Endothelial cell of umbilical vein (primary cell): ENCODE measurements at regions of chr20 and their contacts with region 1.

Region 1: DNA sequence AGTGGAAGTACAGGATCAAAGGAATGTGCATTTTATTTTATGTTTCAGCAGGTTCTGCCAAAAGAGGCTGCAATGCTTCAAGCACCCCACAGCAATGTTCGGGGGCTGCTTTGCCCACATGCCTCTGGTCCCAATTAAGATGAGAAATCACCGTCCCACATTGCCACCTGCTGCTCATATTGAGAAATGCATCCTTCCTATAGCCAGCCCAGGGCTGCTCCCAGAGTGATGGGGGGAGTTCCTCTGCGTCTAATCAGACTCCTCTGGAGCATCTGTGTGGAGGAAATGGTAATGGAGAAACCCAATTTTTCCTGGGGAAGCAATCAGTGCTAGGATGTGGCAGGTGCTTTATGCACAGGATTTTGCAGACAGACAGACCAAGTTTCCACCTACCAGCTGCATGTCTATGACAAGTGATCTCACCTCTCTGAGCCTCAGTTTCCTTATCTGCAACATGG is 33.7 kb downstream of the PTGIS start:
- DNase-seq: peak; percentile 60
- H3K4me3 ChIP-seq: no peak overlapping the region
- H3K27ac ChIP-seq: no peak overlapping the region
- H3K4me1 ChIP-seq: no peaks in the 10 kb centered on the region
- H3K27me3 ChIP-seq: peaks cover 0 to 2% of the 10 kb centered on the region in 2 experiments
- CTCF ChIP-seq: peak; percentile 71
- POLR2A ChIP-seq: no peak

Region 2: GRCh38 chr20:49338061-49338460 is 196.2 kb before region 1 on chr20:
- CTCF ChIA-PET with region 1: interaction called, 5 read pairs
- POLR2A ChIA-PET with region 1: no interaction called
- dilution Hi-C with region 1: no loop called
- intact Hi-C with region 1: loop called (anchors 1 kb)
- DNase-seq: no peak
- H3K4me3 ChIP-seq: no peak overlapping the region
- H3K27ac ChIP-seq: no peak overlapping the region
- H3K4me1 ChIP-seq: no peaks in the 10 kb centered on the region
- H3K27me3 ChIP-seq: peaks cover 0 to 2% of the 10 kb centered on the region in 2 experiments
- CTCF ChIP-seq: no peak
- POLR2A ChIP-seq: no peak

Region 3: GRCh38 chr20:49631061-49631788 is 96.9 kb after region 1 on chr20:
- CTCF ChIA-PET with region 1: no interaction called
- POLR2A ChIA-PET with region 1: no interaction called
- dilution Hi-C with region 1: no loop called
- intact Hi-C with region 1: no loop called
- DNase-seq: no peak
- H3K4me3 ChIP-seq: no peak overlapping the region
- H3K27ac ChIP-seq: no peak overlapping the region
- H3K4me1 ChIP-seq: no peaks in the 10 kb centered on the region
- H3K27me3 ChIP-seq: no peaks in the 10 kb centered on the region
- CTCF ChIP-seq: no peak
- POLR2A ChIP-seq: no peak